Activated B cell treated with CpG ODN at 0.5 μM for 24 hours (primary cell): ENCODE measurements at regions of chr1 and their contacts with region 1.

Region 1: DNA sequence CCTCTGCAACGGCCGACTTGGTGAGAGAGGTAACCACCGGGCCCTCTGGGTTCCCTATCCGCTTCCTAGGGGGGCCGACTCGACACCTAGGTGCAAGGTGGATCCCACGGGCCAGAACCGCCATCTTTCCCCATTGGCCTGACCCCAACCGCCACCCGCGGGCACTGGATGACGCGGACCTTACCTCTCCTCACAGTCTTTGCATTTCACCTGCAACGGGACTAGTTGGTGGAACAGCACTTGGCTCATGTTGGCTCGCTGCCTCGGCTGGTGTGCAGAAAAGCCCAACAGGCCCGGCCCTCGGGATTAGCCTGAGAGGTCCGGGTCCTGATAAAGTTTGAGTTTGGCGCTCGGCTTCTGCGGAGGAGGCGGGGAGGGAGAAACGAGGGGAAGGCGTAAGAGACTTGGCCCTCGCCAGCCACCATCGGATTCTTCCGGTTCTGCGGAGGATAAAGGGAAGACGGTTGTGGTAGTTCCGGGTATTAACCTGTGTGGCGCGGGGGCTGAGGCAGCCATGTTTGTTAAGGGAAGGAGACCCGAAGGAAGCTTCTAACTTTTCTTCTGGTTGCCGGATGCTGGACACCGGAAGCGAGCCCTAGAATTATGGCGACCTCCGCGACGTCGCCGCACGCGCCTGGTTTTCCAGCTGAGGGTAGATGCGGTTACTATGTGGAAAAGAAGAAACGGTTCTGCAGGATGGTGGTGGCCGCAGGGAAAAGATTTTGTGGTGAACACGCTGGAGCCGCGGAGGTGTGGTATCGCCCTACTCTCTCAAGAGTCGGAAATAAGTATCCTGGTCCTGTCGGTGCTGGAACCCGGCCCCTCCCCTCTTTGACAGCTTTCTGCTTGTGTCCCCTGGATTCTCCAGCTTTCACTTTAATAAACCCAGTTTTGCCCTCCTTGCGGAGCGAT is at the starts of genes SASS6 and TRMT13:
- DNase-seq: peak; percentile 81
- ATAC-seq: peak; percentile 99
- H3K4me3 Mint-ChIP-seq: peak within 1 kb of the TSS; percentile 99
- H3K27ac Mint-ChIP-seq: peak within 1 kb of the TSS; percentile 94
- H3K4me1 Mint-ChIP-seq: peaks cover 35% of the 10 kb centered on the region
- H3K27me3 Mint-ChIP-seq: no peaks in the 10 kb centered on the region
- CTCF ChIP-seq: no peak
- total RNA-seq, gene SASS6: 5.5 and 5.9 TPM in 2 replicates
- total RNA-seq, gene TRMT13: 27.2 and 31.4 TPM in 2 replicates

Region 2: GRCh38 chr1:99808391-99809115 is 324.3 kb before region 1 on chr1:
- CTCF ChIA-PET with region 1: no interaction called
- POLR2A ChIA-PET with region 1: no interaction called
- intact Hi-C with region 1: loop called (anchors 2 kb)
- DNase-seq: no peak
- ATAC-seq: peak; percentile 71
- H3K4me3 Mint-ChIP-seq: no peak overlapping the region
- H3K27ac Mint-ChIP-seq: no peak overlapping the region
- H3K4me1 Mint-ChIP-seq: peaks cover 4% of the 10 kb centered on the region
- H3K27me3 Mint-ChIP-seq: peaks cover 10% of the 10 kb centered on the region
- CTCF ChIP-seq: peak; percentile 52

Region 3: GRCh38 chr1:99969729-99970621 is 162.8 kb before region 1 on chr1 and contains the start of gene SLC35A3:
- CTCF ChIA-PET with region 1: no interaction called
- POLR2A ChIA-PET with region 1: interaction called, 16 read pairs
- intact Hi-C with region 1: loop called (anchors 1 kb)
- DNase-seq: peak; percentile 73
- ATAC-seq: peak; percentile 83
- H3K4me3 Mint-ChIP-seq: peak within 1 kb of the TSS; percentile 100
- H3K27ac Mint-ChIP-seq: peak within 1 kb of the TSS; percentile 95
- H3K4me1 Mint-ChIP-seq: peaks cover 27% of the 10 kb centered on the region
- H3K27me3 Mint-ChIP-seq: no peaks in the 10 kb centered on the region
- CTCF ChIP-seq: no peak
- total RNA-seq, gene SLC35A3: 18.3 and 21.1 TPM in 2 replicates

Region 4: DNA sequence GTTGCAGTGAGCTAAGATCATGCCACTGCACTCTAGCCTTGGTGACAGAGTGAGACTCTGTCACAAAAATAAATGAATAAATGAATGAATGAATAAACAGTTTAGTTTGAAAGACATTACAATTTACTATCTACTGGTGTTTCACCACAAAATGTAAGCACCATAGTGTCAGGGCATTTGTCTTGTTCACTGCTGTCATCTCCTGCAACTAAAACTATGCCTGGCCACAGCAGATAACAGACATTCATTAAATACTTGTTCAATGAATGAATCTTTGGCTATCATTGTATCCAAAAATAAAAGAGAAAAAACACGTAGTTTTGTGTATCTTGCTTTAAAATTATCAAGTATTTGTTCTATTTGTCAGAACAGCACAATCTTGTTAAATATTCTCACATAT is 32.6 kb before region 1 on chr1:
- CTCF ChIA-PET with region 1: no interaction called
- POLR2A ChIA-PET with region 1: no interaction called
- intact Hi-C with region 1: no loop called
- DNase-seq: no peak
- ATAC-seq: no peak
- H3K4me3 Mint-ChIP-seq: no peak overlapping the region
- H3K27ac Mint-ChIP-seq: no peak overlapping the region
- H3K4me1 Mint-ChIP-seq: no peaks in the 10 kb centered on the region
- H3K27me3 Mint-ChIP-seq: no peaks in the 10 kb centered on the region
- CTCF ChIP-seq: no peak

Region 5: DNA sequence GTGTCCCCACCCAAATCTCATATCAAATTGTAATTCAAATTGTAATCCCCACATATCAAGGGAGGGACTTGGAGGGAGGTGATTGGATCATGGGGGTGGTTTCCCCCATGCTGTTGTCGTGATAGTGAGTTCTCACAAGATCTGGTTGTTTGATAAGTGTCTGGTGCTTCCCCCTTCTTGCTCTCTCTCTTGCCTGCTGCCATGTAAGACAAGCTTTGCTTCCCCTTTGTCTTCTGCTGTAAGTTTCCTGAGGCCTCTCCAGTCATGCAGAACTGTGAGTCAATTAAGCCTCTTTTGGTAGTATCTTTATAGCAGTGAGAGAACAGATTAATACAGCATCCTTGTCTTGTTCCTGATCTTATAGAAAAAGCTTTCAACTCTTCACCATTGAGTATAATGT is 51.7 kb after region 1 on chr1:
- CTCF ChIA-PET with region 1: no interaction called
- POLR2A ChIA-PET with region 1: interaction called, 6 read pairs
- intact Hi-C with region 1: loop called (anchors 1 kb)
- DNase-seq: no peak
- ATAC-seq: peak; percentile 99
- H3K4me3 Mint-ChIP-seq: no peak overlapping the region
- H3K27ac Mint-ChIP-seq: peak overlapping the region; percentile 75
- H3K4me1 Mint-ChIP-seq: peaks cover 15% of the 10 kb centered on the region
- H3K27me3 Mint-ChIP-seq: no peaks in the 10 kb centered on the region
- CTCF ChIP-seq: no peak

Region 6: DNA sequence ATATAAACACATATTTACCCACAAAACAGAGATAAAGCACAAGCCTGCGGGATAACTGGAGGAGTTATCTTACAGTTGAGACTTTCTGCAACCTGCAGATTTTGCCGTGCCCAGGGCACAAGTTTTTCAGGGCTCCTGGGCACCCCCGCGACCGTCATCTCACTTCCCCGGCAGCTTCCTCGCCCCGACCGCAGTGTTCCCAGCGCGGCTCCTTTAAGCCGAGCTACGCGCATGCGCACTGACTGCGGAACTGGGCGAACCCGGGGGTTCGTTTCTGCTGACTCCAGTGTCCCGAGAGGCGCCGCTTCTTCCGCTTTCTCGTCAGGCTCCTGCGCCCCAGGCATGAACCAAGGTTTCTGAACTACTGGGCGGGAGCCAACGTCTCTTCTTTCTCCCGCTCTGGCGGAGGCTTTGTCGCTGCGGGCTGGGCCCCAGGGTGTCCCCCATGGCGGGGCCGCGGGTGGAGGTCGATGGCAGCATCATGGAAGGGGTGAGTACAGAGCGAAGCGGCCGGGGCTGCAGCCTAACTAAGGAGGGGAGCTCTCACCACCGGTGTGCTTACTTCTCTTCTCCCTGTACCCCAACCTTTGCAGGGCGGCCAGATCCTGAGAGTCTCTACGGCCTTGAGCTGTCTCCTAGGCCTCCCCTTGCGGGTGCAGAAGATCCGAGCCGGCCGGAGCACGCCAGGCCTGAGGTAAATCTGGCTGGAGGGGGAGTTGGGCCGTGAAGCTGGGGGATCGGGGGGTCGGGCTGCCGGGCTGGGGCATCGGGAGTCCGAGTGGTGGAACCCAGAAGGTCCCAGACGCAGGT is 133.3 kb after region 1 on chr1 and contains the start of gene RTCA:
- CTCF ChIA-PET with region 1: no interaction called
- POLR2A ChIA-PET with region 1: interaction called, 11 read pairs
- intact Hi-C with region 1: loop called (anchors 1 kb)
- DNase-seq: peak; percentile 91
- ATAC-seq: peak; percentile 95
- H3K4me3 Mint-ChIP-seq: peak within 1 kb of the TSS; percentile 100
- H3K27ac Mint-ChIP-seq: peak within 1 kb of the TSS; percentile 98
- H3K4me1 Mint-ChIP-seq: peaks cover 38% of the 10 kb centered on the region
- H3K27me3 Mint-ChIP-seq: no peaks in the 10 kb centered on the region
- CTCF ChIP-seq: no peak
- total RNA-seq, gene RTCA: 32.3 and 34.5 TPM in 2 replicates

Region 7: GRCh38 chr1:100895540-100896483 is 763.0 kb after region 1 on chr1 and contains the start of gene SLC30A7:
- CTCF ChIA-PET with region 1: no interaction called
- POLR2A ChIA-PET with region 1: no interaction called
- intact Hi-C with region 1: loop called (anchors 1 kb)
- DNase-seq: peak; percentile 97
- ATAC-seq: peak; percentile 86
- H3K4me3 Mint-ChIP-seq: peak within 1 kb of the TSS; percentile 98
- H3K27ac Mint-ChIP-seq: peak within 1 kb of the TSS; percentile 95
- H3K4me1 Mint-ChIP-seq: peaks cover 29% of the 10 kb centered on the region
- H3K27me3 Mint-ChIP-seq: no peaks in the 10 kb centered on the region
- CTCF ChIP-seq: no peak
- total RNA-seq, gene SLC30A7: 21.1 and 25.7 TPM in 2 replicates